K562 (cell line): ENCODE measurements at regions of chrX and their contacts with region 1.

Region 1: DNA sequence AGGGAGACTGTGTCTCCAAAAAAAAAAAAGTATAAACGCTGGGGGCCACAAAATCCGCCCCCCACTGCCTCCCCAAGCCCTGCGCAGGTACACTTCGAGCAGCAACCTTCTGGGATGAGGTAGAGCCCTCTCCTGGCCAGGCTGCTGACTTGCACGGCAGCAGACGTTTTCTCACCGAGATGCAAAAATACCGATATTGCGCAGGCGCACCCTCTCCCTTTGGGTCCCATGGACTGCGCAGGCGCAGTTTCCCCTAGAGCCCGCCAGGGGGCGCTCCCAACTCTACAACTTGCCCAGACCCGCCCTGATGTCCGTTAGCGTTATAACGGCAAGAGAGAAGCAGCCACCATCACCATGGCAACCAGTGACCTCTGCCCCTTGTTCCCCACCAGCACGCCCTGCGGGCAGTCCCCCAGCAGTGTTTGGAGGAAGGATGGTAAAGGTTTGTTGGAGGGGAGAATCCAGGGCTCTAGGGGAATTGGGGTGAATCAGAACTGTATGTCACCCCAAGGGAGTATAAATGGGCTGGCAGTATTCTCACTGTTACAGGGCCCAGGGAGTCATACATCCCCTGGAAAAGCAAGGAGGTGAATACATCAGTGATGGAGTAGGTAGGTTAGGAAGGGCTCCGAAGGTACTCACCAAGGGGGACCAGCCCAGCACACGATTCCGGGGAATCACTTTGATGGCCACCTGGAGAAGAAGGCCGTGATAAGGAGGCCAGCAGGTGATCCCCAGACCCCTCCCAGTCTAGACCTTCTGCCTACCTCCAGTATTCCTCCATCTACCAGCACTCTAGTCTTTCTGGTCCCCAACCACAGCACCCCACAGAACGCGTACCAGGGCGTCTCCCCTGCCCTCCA is 1.5 kb downstream of the PIM2 start:
- DNase-seq: peak; percentile 76 to 96 (median 86)
- ATAC-seq: peak; percentile 68
- H3K4me3 ChIP-seq: peak overlapping the region; percentile 89
- H3K27ac ChIP-seq: peak overlapping the region; percentile 77
- H3K4me1 ChIP-seq: peaks cover 37 to 47% of the 10 kb centered on the region in 2 experiments
- H3K27me3 ChIP-seq: no peaks in the 10 kb centered on the region; a peak in 1 of 5 replicates
- CTCF ChIP-seq: peak; percentile 85 to 98 (median 95)
- EP300 ChIP-seq: peak; percentile 86
- POLR2A ChIP-seq: no peak
- RAD21 ChIP-seq: peak in 1 of 2 experiments; percentile 67

Region 2: DNA sequence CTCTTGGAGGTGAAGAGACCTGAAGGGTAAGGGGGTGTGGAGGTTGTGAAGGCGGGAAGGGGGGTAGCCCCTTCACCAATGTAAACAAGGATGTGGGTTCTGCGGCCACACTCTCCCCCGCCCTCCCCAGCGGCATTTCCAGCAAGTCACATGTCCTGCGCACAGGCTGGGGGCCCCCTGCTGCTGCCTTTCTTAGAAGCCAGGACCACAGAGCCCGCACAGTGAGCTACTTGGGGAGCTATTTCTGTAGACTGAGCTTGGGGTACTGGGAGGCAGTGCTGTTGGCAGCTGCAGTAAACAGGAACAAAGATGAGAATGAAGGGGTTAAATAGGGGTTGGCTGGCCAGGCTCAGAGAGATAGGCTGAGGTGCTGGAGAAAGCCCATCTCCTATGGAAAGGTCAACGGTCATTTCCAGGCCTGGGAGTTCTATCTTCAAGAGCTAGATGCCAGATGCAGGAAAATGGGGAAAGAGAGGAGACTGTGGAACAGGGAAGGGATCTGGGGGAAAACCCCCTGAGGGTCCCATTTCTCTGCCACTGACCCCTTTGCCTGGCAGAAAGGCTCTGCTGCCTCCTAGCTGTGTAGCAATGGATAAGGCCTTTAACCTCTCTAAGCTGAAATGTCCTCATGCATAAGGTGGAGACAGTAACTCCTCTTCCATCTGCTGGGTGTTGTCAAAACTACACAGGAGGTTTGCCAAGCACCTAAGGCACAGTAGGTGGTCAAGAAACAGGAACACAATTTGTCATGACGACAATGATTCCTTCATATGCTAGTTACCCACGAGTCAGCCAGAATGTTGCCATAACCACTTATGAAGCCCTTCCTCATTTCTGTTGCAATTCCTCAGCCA is 19.9 kb after region 1 on chrX:
- CTCF ChIA-PET with region 1: interaction called, 4 read pairs
- POLR2A ChIA-PET with region 1: interaction called, 4 read pairs
- in situ Hi-C with region 1: no loop called
- intact Hi-C with region 1: loop called (anchors 1 kb)
- DNase-seq: peak; percentile 62 to 93 (median 72)
- ATAC-seq: peak; percentile 82
- H3K4me3 ChIP-seq: no peak overlapping the region; the same call in 1 of the 2 replicates
- H3K27ac ChIP-seq: peak overlapping the region; percentile 91
- H3K4me1 ChIP-seq: peaks cover 51 to 61% of the 10 kb centered on the region in 2 experiments
- H3K27me3 ChIP-seq: no peaks in the 10 kb centered on the region
- CTCF ChIP-seq: peak; percentile 55 to 74 (median 63)
- EP300 ChIP-seq: peak; percentile 80
- POLR2A ChIP-seq: no peak
- RAD21 ChIP-seq: peak; percentile 21 to 56; a peak in 3 of 4 replicates

Region 3: GRCh38 chrX:48945516-48946348 is 28.4 kb after region 1 on chrX:
- CTCF ChIA-PET with region 1: interaction called, 8 read pairs
- POLR2A ChIA-PET with region 1: no interaction called
- in situ Hi-C with region 1: no loop called
- intact Hi-C with region 1: loop called (anchors 1 kb)
- DNase-seq: peak; percentile 33 to 72 (median 48)
- ATAC-seq: peak; percentile 69
- H3K4me3 ChIP-seq: no peak overlapping the region
- H3K27ac ChIP-seq: peak overlapping the region; percentile 4; the same call in 1 of the 3 replicates
- H3K4me1 ChIP-seq: peaks cover 35 to 55% of the 10 kb centered on the region in 2 experiments
- H3K27me3 ChIP-seq: no peaks in the 10 kb centered on the region
- CTCF ChIP-seq: peak; percentile 84 to 86 (median 86)
- EP300 ChIP-seq: no peak
- POLR2A ChIP-seq: no peak
- RAD21 ChIP-seq: peak; percentile 72 to 76